ENCODE measurements at regions of chr5 and their contacts with region 1.

Region 1: DNA sequence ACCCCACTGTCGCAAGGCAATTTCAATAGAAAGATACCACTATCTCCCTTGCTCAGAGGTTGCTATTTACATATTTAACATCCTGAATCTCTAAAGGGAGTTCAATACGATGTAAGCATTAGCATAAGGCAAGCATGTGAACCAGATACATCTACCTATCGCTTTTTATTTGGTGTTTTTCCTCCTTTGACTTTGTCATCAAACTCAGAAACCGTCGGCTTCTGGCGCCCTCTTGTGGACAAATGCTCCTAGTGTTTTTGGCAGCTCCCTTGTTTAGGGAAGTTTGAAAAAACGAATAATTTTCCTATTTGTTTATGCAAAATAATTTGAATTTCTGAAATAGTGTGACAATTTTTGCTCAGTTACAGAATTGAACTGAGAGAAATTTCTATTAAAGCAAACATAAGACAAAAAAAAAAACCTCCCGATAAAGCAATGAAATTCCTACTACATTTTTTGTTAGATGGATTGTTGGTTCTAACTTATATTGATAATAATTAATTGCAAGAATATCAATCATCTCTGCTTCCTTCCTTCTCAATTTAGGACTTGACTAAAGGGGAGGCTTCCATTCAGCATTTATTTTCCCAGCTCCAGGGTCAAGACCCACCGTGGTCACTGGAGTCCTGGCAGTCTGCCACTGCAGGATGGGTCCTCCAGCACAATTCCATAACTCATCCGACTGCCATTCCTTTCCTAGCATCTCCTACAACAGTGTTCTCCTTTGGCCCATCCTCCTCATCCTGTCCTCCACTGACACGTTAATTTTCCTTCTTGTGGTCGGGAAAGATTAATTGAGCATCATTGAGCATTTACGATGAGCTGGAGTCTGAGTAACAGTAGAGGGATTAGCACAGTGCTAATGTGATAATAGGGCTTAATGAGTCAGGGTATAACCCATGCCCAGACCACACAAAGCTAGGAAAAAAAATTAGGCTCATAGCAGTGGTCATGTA is 131.8 kb upstream of the CHD1 start:
- DNase-seq: peak; percentile 89
- ATAC-seq: no peak
- H3K4me3 Mint-ChIP-seq: no peak overlapping the region
- H3K27ac Mint-ChIP-seq: no peak overlapping the region
- H3K4me1 Mint-ChIP-seq: no peaks in the 10 kb centered on the region
- H3K27me3 Mint-ChIP-seq: peaks cover 5% of the 10 kb centered on the region

Region 2: DNA sequence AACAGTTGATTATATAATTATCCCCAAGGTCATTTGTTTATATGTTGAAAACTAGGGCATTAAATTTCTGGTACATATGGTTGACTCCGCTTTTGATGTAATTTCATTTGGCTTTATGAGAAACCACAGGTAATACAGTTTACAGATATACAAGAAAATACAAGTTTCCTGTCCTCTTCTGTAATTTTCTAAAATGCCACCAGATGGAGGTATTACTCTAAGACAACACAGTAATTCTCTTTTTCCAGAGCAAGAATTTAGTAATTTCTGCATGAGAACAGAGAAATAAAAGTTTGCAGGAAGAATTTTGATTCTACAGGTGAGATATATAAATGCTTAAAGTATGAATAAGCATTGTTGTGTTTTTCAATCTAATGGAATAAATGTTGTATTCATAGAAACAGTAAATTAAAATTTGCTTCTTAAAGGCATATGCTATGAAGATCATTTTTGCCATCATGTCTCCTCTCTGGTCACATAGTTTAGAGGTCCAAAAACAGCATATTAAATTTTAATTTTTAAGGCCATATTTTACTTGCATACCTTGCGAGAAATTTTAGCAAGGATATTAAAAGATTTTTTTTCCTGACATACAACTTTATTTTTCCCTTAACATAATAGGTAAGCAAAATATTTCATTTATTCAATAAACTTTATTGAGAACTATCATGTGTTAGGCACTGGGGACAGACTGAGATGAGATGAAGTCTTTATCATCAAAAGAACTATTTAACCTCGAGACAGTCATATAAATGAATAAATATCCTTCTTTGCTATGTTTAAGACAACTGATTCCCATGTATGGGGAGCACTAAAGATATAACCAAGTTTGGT is 154.5 kb before region 1 on chr5:
- CTCF ChIA-PET with region 1: interaction called, 49 read pairs
- POLR2A ChIA-PET with region 1: no interaction called
- DNase-seq: no peak
- ATAC-seq: no peak
- H3K4me3 Mint-ChIP-seq: no peak overlapping the region
- H3K27ac Mint-ChIP-seq: no peak overlapping the region
- H3K4me1 Mint-ChIP-seq: peaks cover 23% of the 10 kb centered on the region
- H3K27me3 Mint-ChIP-seq: no peaks in the 10 kb centered on the region

Region 3: DNA sequence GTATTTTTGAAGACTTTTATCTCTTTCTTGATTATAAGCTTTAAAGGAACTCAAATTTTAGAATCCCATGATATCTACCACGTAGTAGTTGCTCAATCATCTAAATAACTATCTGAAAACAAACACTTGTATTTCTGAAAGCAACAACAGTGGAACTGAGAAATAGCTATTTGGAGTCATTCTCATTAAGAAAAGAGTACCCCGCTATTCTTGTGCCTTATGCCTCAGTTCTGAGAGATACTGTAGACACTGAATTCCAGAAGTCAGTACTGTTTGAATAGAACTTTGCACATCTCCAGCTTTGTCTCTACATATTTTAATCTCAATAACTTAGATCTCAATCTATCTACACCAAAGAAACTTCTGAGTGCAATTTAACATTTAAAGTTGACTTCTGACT is 143.2 kb before region 1 on chr5:
- CTCF ChIA-PET with region 1: interaction called, 10 read pairs
- POLR2A ChIA-PET with region 1: interaction called, 4 read pairs
- DNase-seq: no peak
- ATAC-seq: no peak
- H3K4me3 Mint-ChIP-seq: no peak overlapping the region
- H3K27ac Mint-ChIP-seq: no peak overlapping the region
- H3K4me1 Mint-ChIP-seq: peaks cover 47% of the 10 kb centered on the region
- H3K27me3 Mint-ChIP-seq: no peaks in the 10 kb centered on the region

Region 4: DNA sequence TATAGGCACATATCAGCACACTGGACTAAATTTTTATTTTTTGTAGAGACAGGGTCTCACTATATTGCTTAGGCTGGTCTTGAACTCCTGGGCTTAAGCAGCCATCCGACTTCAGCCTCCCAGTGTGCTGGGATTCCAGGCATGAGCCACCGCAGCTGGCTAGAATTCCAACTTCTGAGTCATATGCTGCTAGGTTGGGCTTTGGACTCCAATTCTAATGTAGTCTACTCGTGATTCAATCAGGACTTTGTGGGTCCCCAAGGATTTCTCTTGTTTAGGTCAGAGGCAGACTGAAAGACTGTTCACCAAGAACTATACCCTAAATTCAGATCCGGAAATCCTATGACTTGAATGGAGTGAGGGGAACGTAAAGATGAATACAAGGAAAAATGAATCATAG is 63.6 kb before region 1 on chr5:
- CTCF ChIA-PET with region 1: no interaction called
- POLR2A ChIA-PET with region 1: no interaction called
- DNase-seq: no peak
- ATAC-seq: no peak
- H3K4me3 Mint-ChIP-seq: no peak overlapping the region
- H3K27ac Mint-ChIP-seq: no peak overlapping the region
- H3K4me1 Mint-ChIP-seq: peaks cover 2% of the 10 kb centered on the region
- H3K27me3 Mint-ChIP-seq: no peaks in the 10 kb centered on the region

Region 5: DNA sequence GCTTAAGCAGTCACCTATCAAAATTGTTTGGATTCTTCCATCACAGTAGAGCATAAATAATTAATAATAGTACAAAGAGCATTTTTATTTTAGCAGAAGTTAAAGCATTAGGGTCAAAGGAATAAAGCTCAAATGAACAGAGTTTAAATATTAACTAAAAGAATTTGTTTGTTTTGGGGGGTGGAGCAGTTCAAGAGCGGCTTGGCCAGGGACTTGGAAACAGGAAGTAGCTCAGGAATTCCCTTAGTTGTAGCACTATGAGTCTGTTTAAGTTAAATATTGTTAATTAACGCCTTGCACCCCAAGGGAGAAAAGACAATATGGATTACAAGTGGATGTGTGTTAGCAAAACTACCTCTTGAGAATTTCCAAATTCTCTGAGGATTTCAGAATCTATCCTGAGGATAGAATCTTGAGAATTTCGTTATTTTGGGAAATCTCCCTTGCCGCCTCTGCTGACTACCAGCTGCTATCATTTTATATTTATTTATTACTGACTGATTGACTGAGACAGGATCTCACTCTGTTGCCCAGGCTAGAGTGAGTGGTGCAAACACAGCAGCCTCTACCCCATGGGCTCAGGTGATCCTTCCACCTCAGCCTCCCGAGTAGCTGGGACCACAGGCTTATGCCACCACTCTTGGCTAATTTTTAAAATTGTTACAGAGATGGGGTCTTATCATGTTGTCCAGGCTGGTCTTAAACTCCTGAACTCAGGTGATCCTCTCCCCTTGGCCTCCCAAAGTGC is 35.1 kb before region 1 on chr5:
- CTCF ChIA-PET with region 1: interaction called, 17 read pairs
- POLR2A ChIA-PET with region 1: no interaction called
- DNase-seq: no peak
- ATAC-seq: no peak
- H3K4me3 Mint-ChIP-seq: no peak overlapping the region
- H3K27ac Mint-ChIP-seq: no peak overlapping the region
- H3K4me1 Mint-ChIP-seq: peaks cover 24% of the 10 kb centered on the region
- H3K27me3 Mint-ChIP-seq: no peaks in the 10 kb centered on the region

Region 6: GRCh38 chr5:99045871-99046270 is 14.7 kb before region 1 on chr5:
- CTCF ChIA-PET with region 1: interaction called, 13 read pairs
- POLR2A ChIA-PET with region 1: no interaction called
- DNase-seq: no peak
- ATAC-seq: no peak
- H3K4me3 Mint-ChIP-seq: no peak overlapping the region
- H3K27ac Mint-ChIP-seq: no peak overlapping the region
- H3K4me1 Mint-ChIP-seq: no peaks in the 10 kb centered on the region
- H3K27me3 Mint-ChIP-seq: peaks cover 2% of the 10 kb centered on the region

Measured in activated CD8-positive, alpha-beta T cell treated with anti-CD3 and anti-CD28 coated beads, Interleukin-2, amount 10 ng/mL, durations not matched to agents 7 days and 5 days (primary cell).